Heart left ventricle (tissue), 16 donors: ENCODE measurements at regions of chr2 and their contacts with region 1.

Region 1: DNA sequence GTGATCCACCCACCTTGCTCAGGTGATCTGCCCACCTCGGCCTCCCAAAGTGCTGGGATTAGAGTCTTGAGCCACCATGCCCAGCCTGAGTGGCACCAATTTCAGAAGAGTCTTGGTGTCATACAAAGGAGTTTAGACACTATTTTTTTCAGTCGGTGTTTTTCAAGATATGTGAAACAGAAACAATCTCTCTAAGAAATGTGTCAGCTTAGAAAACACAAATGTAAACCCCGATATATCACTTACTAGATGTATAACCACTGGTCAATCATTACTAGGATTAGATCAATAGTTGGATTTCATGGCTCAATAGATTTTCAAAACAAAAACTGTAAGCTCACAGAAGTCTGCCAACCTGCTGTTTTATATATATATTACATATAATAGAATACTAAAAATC is 67.2 kb upstream of the FRZB start:
- DNase-seq: no peak
- ATAC-seq: no peak
- H3K4me3 ChIP-seq: no peak overlapping the region
- H3K27ac ChIP-seq: no peak overlapping the region
- H3K4me1 ChIP-seq: no peaks in the 10 kb centered on the region
- H3K27me3 ChIP-seq: no peaks in the 10 kb centered on the region
- CTCF ChIP-seq: no peak
- POLR2A ChIP-seq: no peak

Region 2: DNA sequence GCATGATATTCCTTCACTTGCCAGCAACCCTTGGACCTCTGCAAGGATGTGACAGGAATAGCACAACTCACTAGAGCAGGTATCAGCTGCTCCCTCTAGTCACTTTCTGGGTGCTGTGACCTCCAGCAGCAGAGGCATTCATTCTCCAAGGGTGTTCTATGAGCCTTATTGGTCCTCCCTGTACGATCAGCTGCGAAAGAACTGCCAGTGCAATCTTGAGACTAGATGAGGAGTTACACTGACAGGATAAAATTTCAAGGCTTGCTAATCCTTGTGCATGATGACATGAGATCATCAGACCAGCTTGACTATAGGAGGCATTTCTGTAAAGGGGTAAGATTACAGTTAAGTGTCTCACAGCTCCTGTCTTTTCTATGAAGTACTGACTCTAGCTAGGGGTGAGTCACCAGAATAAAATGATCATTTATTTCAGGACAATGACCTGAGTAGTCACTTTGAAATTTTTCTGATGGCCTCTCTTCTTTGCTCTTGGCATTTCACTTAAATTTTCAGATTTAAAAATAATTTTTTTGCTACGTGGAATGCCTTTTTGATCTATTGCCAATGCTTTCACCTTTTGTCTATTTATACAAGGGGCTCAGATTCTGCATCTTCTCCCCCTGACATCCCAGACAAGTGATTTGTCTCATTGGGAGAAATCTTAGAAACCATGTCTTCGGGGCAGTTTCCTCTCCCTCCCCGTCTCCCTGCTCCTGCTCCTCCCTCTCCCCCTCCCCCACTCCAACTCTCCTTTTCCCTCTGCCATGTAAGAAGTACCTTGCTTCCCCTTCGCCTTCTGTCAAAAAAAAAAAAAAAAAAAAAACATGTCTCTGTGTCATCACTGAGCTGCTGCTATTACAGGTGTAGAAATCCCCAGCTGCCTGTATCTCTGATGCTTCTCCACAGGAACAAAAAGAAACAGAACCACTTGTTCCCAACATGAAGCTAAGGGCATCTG is 18.0 kb before region 1 on chr2:
- intact Hi-C with region 1: loop called in 1 of 10 experiments (anchors 2 kb)
- DNase-seq: peak in 1 of 5 donors; percentile 25
- ATAC-seq: peak; percentile 51 to 86 (median 79)
- H3K4me3 ChIP-seq: no peak overlapping the region
- H3K27ac ChIP-seq: peak overlapping the region in 4 of 12 donors; percentile 3 to 23 (median 8)
- H3K4me1 ChIP-seq: peaks cover 0 to 11% (median 0%) of the 10 kb centered on the region in 12 donors
- H3K27me3 ChIP-seq: no peaks in the 10 kb centered on the region
- CTCF ChIP-seq: no peak
- POLR2A ChIP-seq: no peak

Region 3: GRCh38 chr2:182971820-182972547 is 38.4 kb after region 1 on chr2:
- intact Hi-C with region 1: loop called in 2 of 10 experiments (anchors 5 to 10 kb)
- DNase-seq: no peak
- ATAC-seq: no peak
- H3K4me3 ChIP-seq: no peak overlapping the region
- H3K27ac ChIP-seq: no peak overlapping the region
- H3K4me1 ChIP-seq: peaks cover 0 to 25% (median 1%) of the 10 kb centered on the region in 12 donors
- H3K27me3 ChIP-seq: no peaks in the 10 kb centered on the region
- CTCF ChIP-seq: no peak
- POLR2A ChIP-seq: no peak

Region 4: GRCh38 chr2:183000846-183001245 is 67.2 kb after region 1 on chr2:
- intact Hi-C with region 1: no loop called
- DNase-seq: peak in 1 of 5 donors; percentile 26
- ATAC-seq: peak in 2 of 4 donors; percentile 42 to 62
- H3K4me3 ChIP-seq: no peak overlapping the region
- H3K27ac ChIP-seq: no peak overlapping the region
- H3K4me1 ChIP-seq: peaks cover 0 to 30% (median 0%) of the 10 kb centered on the region in 12 donors
- H3K27me3 ChIP-seq: no peaks in the 10 kb centered on the region
- CTCF ChIP-seq: no peak
- POLR2A ChIP-seq: no peak